Activated CD4-positive, alpha-beta T cell treated with anti-CD3 and anti-CD28 coated beads, Interleukin-2, amount 10 ng/mL, durations not matched to agents 24 days and 14 days (primary cell): ENCODE measurements at regions of chr17 and their contacts with region 1.

Region 1: GRCh38 chr17:2275722-2276121 is 27.9 kb downstream of the SMG6 start:
- DNase-seq: peak; percentile 84
- H3K4me3 Mint-ChIP-seq: peak overlapping the region; percentile 23
- H3K27ac Mint-ChIP-seq: peak overlapping the region; percentile 52
- H3K4me1 Mint-ChIP-seq: peaks cover 56% of the 10 kb centered on the region
- H3K27me3 Mint-ChIP-seq: no peaks in the 10 kb centered on the region

Region 2: GRCh38 chr17:2259769-2260536 is 15.8 kb before region 1 on chr17:
- intact Hi-C with region 1: loop called (anchors 2 kb)
- DNase-seq: peak; percentile 94
- H3K4me3 Mint-ChIP-seq: peak overlapping the region; percentile 81
- H3K27ac Mint-ChIP-seq: peak overlapping the region; percentile 98
- H3K4me1 Mint-ChIP-seq: peaks cover 71% of the 10 kb centered on the region
- H3K27me3 Mint-ChIP-seq: no peaks in the 10 kb centered on the region